ENCODE measurements at regions of chr3 and their contacts with region 1.

Region 1: DNA sequence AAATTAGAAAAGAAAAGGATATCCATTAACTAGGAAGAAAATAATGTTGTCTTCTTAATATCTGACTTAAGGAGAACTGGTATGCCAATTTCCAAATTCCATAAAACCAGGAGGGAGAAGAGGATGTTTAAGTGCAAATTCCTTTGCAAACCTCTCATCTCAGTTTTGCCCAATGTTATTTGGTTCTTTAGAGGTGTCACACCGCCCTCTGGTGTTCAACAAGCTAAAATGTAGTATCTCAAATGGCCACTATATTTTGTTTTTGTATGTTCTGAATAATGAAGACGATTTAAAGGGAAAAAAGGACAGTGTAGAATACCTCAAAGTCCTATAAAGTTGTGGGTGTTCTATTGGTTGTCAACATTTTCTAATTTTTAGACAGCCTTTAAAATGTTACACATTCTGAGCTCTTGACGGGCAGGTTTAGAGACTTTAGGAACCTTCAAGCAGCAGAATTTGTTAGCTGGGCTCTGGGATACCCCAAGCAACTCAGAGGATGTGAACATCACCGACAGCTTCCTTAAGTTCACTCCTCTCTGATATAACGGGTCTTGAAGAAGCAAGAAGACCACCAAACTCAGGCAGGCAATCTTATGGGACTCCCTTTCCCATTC is 458.3 kb downstream of the MFSD1 start:
- DNase-seq: peak in 13 of 35 experiments; percentile 1 to 57 (median 8)
- ATAC-seq: no peak
- H3K4me3 ChIP-seq: no peak overlapping the region
- H3K4me3 Mint-ChIP-seq: no peak overlapping the region
- H3K27ac ChIP-seq: no peak overlapping the region
- H3K27ac Mint-ChIP-seq: no peak overlapping the region
- H3K4me1 ChIP-seq: no peaks in the 10 kb centered on the region
- H3K4me1 Mint-ChIP-seq: no peaks in the 10 kb centered on the region
- H3K27me3 ChIP-seq: no peaks in the 10 kb centered on the region
- H3K27me3 Mint-ChIP-seq: peaks cover 5 to 8% of the 10 kb centered on the region in 2 donors

Region 2: GRCh38 chr3:158845765-158846350 is 414.3 kb before region 1 on chr3:
- CTCF ChIA-PET with region 1: interaction called, 12 to 13 read pairs
- POLR2A ChIA-PET with region 1: no interaction called
- DNase-seq: peak in 22 of 35 experiments; percentile 3 to 59 (median 12)
- ATAC-seq: peak in 3 of 4 experiments; percentile 44 to 56 (median 45)
- H3K4me3 ChIP-seq: no peak overlapping the region
- H3K4me3 Mint-ChIP-seq: no peak overlapping the region
- H3K27ac ChIP-seq: no peak overlapping the region
- H3K27ac Mint-ChIP-seq: no peak overlapping the region
- H3K4me1 ChIP-seq: peaks cover 0 to 2% of the 10 kb centered on the region in 2 experiments
- H3K4me1 Mint-ChIP-seq: peaks cover 6 to 15% (median 13%) of the 10 kb centered on the region in 3 donors
- H3K27me3 ChIP-seq: peaks cover 0 to 5% of the 10 kb centered on the region in 2 experiments
- H3K27me3 Mint-ChIP-seq: no peaks in the 10 kb centered on the region

Region 3: DNA sequence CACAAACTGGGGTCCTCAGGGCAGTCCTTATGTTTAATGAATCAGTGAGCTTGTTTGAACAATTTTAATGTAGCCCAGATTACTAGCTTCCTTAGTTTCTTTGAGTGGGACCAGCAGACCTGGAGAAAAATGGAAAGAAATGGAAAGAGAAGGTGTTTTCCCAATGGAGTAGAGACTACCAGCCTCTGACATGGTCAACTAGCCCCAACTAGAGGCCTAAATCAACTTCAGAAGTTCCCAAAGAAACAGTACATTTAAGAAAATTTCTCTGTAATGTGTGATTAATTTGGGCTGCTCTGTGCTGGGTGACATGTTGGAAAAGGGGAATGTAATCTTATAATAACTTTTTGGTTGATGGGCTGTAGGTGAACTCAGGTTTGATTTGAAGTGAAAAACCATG is 147.4 kb before region 1 on chr3:
- CTCF ChIA-PET with region 1: no interaction called
- POLR2A ChIA-PET with region 1: no interaction called
- DNase-seq: no peak
- ATAC-seq: no peak
- H3K4me3 ChIP-seq: no peak overlapping the region
- H3K4me3 Mint-ChIP-seq: no peak overlapping the region
- H3K27ac ChIP-seq: no peak overlapping the region
- H3K27ac Mint-ChIP-seq: no peak overlapping the region
- H3K4me1 ChIP-seq: no peaks in the 10 kb centered on the region
- H3K4me1 Mint-ChIP-seq: no peaks in the 10 kb centered on the region
- H3K27me3 ChIP-seq: no peaks in the 10 kb centered on the region
- H3K27me3 Mint-ChIP-seq: peaks cover 0 to 3% of the 10 kb centered on the region in 2 donors

Measured in T-cell (primary cell).